ENCODE measurements at regions of chr19 and their contacts with region 1.

Region 1: DNA sequence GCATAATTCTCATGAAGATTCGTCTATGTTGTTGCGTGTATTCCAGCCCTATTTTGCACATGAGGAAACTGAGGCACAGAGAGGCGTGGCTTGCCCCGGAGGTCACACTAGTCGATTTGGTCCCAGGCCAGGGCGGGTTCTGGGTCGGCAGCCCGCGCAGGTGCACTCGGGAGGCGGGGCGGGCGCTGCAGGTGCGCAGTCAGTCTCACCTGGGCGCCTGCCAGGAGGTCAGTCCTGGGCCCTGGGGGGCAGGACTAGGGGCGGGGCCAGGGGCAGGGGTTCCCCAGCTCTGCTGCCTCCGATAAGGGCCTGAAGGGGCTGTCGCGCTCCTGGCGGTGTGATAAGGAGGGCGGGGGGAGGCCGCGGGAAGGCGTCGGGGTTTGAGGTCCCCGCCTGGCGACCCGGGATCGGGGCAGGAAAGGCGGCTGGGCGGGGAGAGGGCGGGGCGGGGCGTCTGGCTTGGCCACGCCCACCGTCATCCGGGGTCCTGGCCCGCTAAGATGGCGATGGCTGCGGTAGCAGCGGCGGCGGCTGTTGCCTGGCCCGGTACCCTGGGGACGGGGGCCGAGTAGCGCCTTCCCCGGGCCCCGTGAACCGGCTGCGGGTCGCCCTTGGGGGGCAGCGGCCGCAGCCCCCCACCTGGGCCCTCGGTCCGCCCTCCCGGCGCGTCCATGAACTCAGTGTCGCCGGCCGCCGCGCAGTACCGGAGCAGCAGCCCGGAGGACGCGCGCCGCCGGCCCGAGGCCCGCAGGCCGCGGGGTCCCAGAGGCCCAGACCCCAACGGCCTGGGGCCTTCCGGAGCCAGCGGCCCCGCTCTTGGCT is at the start of gene ATG4D:
- DNase-seq: peak; percentile 88
- ATAC-seq: peak; percentile 82
- H3K4me3 ChIP-seq: peak within 1 kb of the TSS; percentile 27 to 88 (median 75)
- H3K4me3 Mint-ChIP-seq: peak within 1 kb of the TSS; percentile 89
- H3K27ac ChIP-seq: peak within 1 kb of the TSS; percentile 34 to 85
- H3K27ac Mint-ChIP-seq: peak within 1 kb of the TSS; percentile 87
- H3K4me1 ChIP-seq: peaks cover 12 to 19% of the 10 kb centered on the region in 2 donors
- H3K4me1 Mint-ChIP-seq: peaks cover 16% of the 10 kb centered on the region
- H3K27me3 ChIP-seq: peaks cover 0 to 5% (median 0%) of the 10 kb centered on the region in 4 experiments
- H3K27me3 Mint-ChIP-seq: peaks cover 6% of the 10 kb centered on the region
- CTCF ChIP-seq: no peak
- total RNA-seq, gene ATG4D: 58.8 and 59.2 TPM in 2 replicates

Region 2: DNA sequence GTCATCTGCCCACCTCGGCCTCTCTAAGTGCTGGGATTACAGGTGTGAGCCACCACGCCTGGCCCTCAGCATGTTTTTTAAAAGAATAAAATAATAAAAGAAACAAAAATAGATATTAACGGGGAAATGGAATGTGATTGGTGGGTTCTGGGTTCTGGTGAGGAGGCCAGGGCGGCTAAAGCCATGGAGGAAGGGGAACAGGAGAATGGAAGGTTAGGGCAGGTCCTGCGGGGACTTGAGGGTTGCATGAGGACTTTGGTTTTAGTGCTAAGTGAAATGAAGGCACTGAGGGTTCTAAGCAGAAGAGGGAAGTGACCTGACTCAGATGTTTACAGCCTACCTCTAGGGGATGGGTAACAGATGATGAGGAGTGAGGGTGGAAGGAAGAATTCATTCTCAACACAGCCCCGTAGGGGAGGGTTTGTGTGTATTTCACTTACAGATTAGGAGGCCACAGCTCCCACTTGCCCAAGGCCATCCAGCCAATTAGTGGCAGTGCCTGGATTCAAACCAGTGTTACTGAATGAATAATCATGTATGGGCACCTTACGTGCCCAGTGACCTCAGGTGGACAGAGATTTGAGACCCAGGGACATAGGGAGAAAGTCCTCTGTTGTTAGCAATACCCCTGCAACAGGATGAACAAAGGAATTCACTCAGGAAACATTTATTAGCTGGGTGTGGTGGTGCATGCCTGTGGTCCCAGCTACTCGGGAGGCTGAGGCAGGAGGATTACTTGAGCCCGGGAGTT is 298.3 kb before region 1 on chr19:
- CTCF ChIA-PET with region 1: no interaction called
- POLR2A ChIA-PET with region 1: interaction called, 14 read pairs
- intact Hi-C with region 1: no loop called
- DNase-seq: no peak
- ATAC-seq: peak; percentile 68
- H3K4me3 ChIP-seq: no peak overlapping the region
- H3K4me3 Mint-ChIP-seq: no peak overlapping the region
- H3K27ac ChIP-seq: no peak overlapping the region
- H3K27ac Mint-ChIP-seq: peak overlapping the region; percentile 84
- H3K4me1 ChIP-seq: peaks cover 3 to 13% of the 10 kb centered on the region in 2 donors
- H3K4me1 Mint-ChIP-seq: peaks cover 20% of the 10 kb centered on the region
- H3K27me3 ChIP-seq: no peaks in the 10 kb centered on the region
- H3K27me3 Mint-ChIP-seq: no peaks in the 10 kb centered on the region
- CTCF ChIP-seq: no peak

Region 3: DNA sequence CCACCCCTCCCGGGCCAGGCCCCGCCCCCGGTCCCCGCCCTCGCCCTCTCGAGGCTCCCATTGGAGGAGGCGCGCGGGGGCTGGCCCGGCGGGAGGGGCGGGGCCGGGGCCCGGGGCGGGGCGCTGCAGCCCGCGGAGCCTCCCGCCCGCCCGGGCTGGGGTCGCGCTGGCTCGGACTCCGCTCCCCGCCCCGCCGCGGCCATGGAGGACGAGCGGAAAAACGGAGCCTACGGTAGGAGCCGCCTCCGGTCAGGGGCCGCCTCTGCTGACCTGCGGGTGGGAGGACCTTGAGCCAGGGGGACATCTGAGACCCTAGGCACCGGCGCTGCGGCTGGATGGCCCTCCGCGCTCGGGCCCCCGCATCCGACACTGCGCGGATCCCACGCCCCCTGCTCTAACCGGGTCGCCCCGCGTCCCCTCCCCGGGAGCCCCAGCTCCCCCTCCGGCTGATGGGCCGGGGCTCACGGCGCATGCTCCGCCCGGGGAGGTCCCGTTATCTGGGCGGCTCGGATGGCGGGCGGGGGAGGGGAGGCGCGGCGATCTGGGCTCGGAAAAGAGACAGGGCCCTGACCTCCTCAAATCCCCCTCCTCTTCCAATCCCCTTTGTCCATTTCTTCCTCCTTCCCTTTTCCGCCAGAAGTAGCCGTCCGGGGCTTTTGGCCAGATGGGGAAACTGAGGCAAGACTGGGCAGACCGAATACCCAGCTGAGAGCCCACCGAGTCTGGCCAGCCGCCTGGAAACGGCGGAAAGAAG is 58.9 kb after region 1 on chr19:
- CTCF ChIA-PET with region 1: interaction called, 3 read pairs
- POLR2A ChIA-PET with region 1: interaction called, 4 read pairs
- intact Hi-C with region 1: loop called (anchors 2 kb)
- DNase-seq: peak; percentile 86
- ATAC-seq: peak; percentile 73
- H3K4me3 ChIP-seq: peak overlapping the region; percentile 89 to 100 (median 94)
- H3K4me3 Mint-ChIP-seq: peak overlapping the region; percentile 96
- H3K27ac ChIP-seq: peak overlapping the region; percentile 97 to 99
- H3K27ac Mint-ChIP-seq: peak overlapping the region; percentile 99
- H3K4me1 ChIP-seq: peaks cover 30 to 47% of the 10 kb centered on the region in 2 donors
- H3K4me1 Mint-ChIP-seq: peaks cover 37% of the 10 kb centered on the region
- H3K27me3 ChIP-seq: no peaks in the 10 kb centered on the region
- H3K27me3 Mint-ChIP-seq: no peaks in the 10 kb centered on the region
- CTCF ChIP-seq: no peak

Measured in B cell (primary cell).